Calu3 (cell line): ENCODE measurements at regions of chrX and their contacts with region 1.

Region 1: GRCh38 chrX:56729152-56729850 is at the start of gene NBDY:
- DNase-seq: peak; percentile 37
- H3K4me3 Mint-ChIP-seq: peak within 1 kb of the TSS; percentile 83
- H3K27ac Mint-ChIP-seq: peak within 1 kb of the TSS; percentile 77
- H3K4me1 Mint-ChIP-seq: peaks cover 8% of the 10 kb centered on the region
- H3K27me3 Mint-ChIP-seq: no peaks in the 10 kb centered on the region
- CTCF ChIP-seq: no peak
- total RNA-seq, gene NBDY: 57.1 and 65.0 TPM in 2 replicates

Region 2: DNA sequence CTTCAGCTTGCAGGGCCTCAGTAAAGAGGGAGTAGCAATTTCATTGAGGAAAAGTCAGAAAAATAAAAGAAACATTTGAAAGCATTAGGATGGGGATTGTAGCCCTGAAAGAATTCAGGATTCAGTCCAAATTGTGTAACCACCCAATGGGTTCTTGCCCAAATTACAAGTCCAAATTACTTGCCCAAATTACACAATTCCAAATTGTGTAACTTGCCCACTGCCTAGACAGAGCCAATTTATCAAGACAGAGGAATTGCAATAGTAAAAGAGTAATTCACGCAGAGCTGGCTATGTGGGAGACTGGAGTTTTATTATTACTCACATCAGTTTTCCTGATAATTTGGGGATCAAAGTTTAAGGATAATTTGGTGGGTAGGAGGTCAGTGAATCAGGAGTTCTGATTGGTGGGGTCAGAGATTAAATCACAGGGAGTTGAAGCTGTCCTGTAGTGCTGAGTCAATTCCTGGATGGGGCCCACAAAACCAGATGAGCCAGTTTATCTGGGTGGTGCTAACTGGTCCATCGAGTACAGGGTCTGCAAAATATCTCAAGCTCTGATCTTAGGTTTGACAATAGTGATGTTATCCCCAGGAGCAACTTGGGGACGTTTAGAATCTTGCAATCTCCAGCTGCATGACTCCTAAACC is 1527.2 kb before region 1 on chrX:
- CTCF ChIA-PET with region 1: no interaction called
- intact Hi-C with region 1: no loop called
- DNase-seq: peak; percentile 10
- H3K4me3 Mint-ChIP-seq: no peak overlapping the region
- H3K27ac Mint-ChIP-seq: no peak overlapping the region
- H3K4me1 Mint-ChIP-seq: peaks cover 19% of the 10 kb centered on the region
- H3K27me3 Mint-ChIP-seq: no peaks in the 10 kb centered on the region
- CTCF ChIP-seq: no peak

Region 3: DNA sequence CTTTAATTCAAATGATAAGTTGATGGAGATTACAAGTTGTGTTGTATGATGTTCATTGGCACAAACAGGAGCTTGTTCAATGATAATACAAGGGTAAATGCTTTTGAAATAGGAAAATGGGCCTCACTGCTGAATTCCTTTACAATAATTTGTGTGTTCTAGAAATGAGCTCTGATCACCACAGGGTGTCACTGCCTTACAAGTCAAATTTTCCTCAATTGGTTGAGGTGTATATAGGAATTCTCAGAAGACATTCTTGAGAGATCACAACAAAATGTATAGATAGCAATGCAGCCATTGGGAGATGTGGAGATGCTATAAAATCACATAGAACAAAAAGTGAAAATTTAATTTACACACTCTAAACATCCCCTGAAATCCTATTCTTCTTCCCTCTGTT is 447.5 kb before region 1 on chrX:
- CTCF ChIA-PET with region 1: interaction called, 14 read pairs
- intact Hi-C with region 1: loop called (anchors 1 kb)
- DNase-seq: peak; percentile 11
- H3K4me3 Mint-ChIP-seq: no peak overlapping the region
- H3K27ac Mint-ChIP-seq: no peak overlapping the region
- H3K4me1 Mint-ChIP-seq: no peaks in the 10 kb centered on the region
- H3K27me3 Mint-ChIP-seq: no peaks in the 10 kb centered on the region
- CTCF ChIP-seq: no peak

Region 4: GRCh38 chrX:56462389-56462788 is 266.9 kb before region 1 on chrX:
- CTCF ChIA-PET with region 1: no interaction called
- intact Hi-C with region 1: no loop called
- DNase-seq: no peak
- H3K4me3 Mint-ChIP-seq: no peak overlapping the region
- H3K27ac Mint-ChIP-seq: no peak overlapping the region
- H3K4me1 Mint-ChIP-seq: no peaks in the 10 kb centered on the region
- H3K27me3 Mint-ChIP-seq: no peaks in the 10 kb centered on the region
- CTCF ChIP-seq: no peak

Region 5: DNA sequence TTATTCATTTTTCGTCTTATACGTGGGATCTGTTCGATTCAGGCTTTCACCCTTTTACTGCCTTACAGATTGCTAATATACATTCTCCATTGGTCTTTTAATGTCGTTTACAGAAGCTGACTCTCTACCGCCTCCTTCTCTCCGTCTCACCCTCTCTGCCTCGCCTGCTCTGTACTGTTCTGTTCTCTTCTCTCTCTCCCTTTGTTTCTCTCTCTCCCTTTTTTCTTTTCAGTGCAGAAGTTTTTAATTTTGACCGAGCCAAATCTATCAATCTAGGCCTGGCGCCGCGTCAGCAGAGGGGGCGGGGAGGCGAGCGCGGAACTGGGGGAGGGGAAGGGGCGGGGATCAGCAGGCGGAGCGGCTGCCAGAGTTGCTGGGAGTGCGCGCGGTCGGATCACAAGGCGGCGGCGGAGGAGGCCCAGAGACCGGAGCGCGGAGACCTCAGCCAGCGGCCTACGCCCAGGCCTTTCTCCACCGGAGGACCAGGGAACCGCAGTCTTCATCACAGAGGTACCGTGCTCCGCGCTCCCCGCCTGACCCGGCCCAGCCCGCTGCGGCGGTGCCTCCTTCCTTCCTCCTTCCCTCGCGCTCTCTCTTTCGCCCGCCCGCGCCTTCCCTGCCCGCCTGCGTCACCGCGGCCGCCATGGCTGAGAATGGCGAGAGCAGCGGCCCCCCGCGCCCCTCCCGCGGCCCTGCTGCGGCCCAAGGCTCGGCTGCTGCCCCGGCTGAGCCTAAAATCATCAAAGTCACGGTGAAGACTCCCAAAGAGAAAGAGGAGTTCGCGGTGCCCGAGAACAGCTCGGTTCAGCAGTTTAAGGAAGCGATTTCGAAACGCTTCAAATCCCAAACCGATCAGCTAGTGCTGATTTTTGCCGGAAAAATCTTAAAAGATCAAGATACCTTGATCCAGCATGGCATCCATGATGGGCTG is 165.8 kb before region 1 on chrX and contains the start of gene UBQLN2:
- CTCF ChIA-PET with region 1: no interaction called
- intact Hi-C with region 1: loop called (anchors 5 kb)
- DNase-seq: peak; percentile 78
- H3K4me3 Mint-ChIP-seq: peak within 1 kb of the TSS; percentile 67
- H3K27ac Mint-ChIP-seq: peak within 1 kb of the TSS; percentile 85
- H3K4me1 Mint-ChIP-seq: peaks cover 2% of the 10 kb centered on the region
- H3K27me3 Mint-ChIP-seq: no peaks in the 10 kb centered on the region
- CTCF ChIP-seq: no peak
- total RNA-seq, gene UBQLN2: 33.7 and 38.2 TPM in 2 replicates

Region 6: DNA sequence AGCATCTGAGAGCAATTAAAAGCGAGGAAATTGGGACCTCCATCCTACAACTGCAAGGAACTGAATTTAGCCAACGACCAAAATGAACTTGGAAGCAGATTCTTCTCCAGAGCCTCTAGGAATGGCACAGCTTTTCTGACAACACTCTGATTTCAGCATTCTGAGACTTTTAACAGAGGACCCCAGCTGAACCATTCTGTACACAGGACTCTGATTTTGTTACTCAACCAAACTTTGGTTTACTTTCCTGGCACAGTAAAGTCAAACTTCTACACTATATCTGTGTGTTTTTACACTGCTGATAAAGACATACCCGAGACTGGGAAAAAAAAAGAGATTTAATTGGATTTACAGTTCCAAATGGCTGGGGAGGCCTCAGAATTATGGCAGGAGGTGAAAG is 128.3 kb before region 1 on chrX:
- CTCF ChIA-PET with region 1: no interaction called
- intact Hi-C with region 1: no loop called
- DNase-seq: no peak
- H3K4me3 Mint-ChIP-seq: no peak overlapping the region
- H3K27ac Mint-ChIP-seq: no peak overlapping the region
- H3K4me1 Mint-ChIP-seq: peaks cover 11% of the 10 kb centered on the region
- H3K27me3 Mint-ChIP-seq: no peaks in the 10 kb centered on the region
- CTCF ChIP-seq: no peak

Region 7: GRCh38 chrX:56876286-56876685 is 147.0 kb after region 1 on chrX:
- CTCF ChIA-PET with region 1: no interaction called
- intact Hi-C with region 1: no loop called
- DNase-seq: no peak
- H3K4me3 Mint-ChIP-seq: no peak overlapping the region
- H3K27ac Mint-ChIP-seq: no peak overlapping the region
- H3K4me1 Mint-ChIP-seq: no peaks in the 10 kb centered on the region
- H3K27me3 Mint-ChIP-seq: no peaks in the 10 kb centered on the region
- CTCF ChIP-seq: no peak